ENCODE measurements at regions of chr4 and their contacts with region 1.

Region 1: DNA sequence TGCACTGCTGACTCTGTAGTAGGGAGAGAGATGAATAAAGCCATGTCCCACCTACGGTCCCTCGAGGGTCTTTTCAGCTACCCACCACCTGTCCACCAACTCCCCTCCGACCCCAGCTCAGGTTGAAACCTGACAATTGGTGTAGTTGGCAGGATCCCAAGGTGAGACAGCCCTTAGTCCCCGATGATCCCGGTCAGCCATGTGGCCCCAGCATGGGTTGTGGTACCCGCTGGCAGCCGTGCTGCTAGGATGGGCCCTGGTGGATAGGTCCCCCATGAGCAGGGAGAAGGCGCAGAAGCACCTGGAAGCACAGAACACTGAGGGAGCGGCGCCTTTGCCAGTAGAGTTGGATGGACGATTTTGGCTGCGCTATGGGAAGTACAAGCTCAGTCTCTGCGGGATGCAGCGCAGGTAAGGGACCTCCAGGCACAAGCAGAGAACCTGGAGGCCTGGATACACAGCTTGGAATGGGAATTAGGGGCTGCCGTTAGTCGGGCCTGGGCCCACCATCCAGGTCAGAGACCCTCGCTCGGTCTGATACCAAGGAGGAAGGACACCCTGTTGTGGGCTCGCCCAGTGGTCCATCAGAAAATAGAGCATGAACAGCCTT is 694.6 kb upstream of the AGA start:
- DNase-seq: peak; percentile 22
- ATAC-seq: no peak

Region 2: DNA sequence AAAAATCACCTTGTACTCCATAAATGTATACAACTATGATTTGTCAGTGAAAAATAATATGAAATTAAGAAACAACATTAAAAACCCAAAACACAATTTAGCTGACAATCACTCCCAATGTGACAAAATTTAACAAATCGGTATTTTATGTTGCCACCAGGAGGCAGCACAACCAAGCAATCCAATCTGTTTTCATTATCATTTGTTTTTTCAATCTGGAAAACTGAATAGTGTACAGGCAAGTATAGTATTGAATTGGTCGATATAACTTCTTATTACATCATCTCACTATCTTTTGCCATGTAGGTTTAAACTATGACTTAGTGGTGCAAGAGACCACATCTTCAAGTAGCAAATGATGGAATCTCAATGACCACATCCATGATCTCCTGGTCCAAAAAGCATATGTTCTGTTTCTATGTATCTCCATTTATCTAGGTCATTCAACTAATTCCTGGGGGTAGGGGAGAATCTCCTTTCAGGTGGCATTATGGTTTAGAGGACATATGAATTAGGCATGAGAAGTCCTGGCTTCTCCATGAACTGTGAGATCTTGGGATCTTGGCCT is 581.8 kb before region 1 on chr4:
- intact Hi-C with region 1: loop called (anchors 10 kb)
- DNase-seq: no peak
- ATAC-seq: no peak

Region 3: GRCh38 chr4:178185517-178185916 is 48.7 kb after region 1 on chr4:
- intact Hi-C with region 1: no loop called
- DNase-seq: peak; percentile 43
- ATAC-seq: peak; percentile 96

Region 4: GRCh38 chr4:178296669-178297068 is 159.8 kb after region 1 on chr4:
- intact Hi-C with region 1: no loop called
- DNase-seq: no peak
- ATAC-seq: no peak

Measured in Right ventricle myocardium superior (tissue), 1 donor.